T-cell (primary cell): ENCODE measurements at regions of chr3 and their contacts with region 1.

Region 1: GRCh38 chr3:69161587-69162307 is 39.4 kb upstream of the LMOD3 start:
- DNase-seq: peak in 21 of 35 experiments; percentile 1 to 72 (median 18)
- ATAC-seq: peak; percentile 54 to 66 (median 60)
- H3K4me3 ChIP-seq: no peak overlapping the region
- H3K4me3 Mint-ChIP-seq: no peak overlapping the region
- H3K27ac ChIP-seq: no peak overlapping the region
- H3K27ac Mint-ChIP-seq: no peak overlapping the region
- H3K4me1 ChIP-seq: no peaks in the 10 kb centered on the region
- H3K4me1 Mint-ChIP-seq: peaks cover 0 to 9% (median 3%) of the 10 kb centered on the region in 3 donors
- H3K27me3 ChIP-seq: peaks cover 0 to 3% of the 10 kb centered on the region in 2 experiments
- H3K27me3 Mint-ChIP-seq: no peaks in the 10 kb centered on the region

Region 2: DNA sequence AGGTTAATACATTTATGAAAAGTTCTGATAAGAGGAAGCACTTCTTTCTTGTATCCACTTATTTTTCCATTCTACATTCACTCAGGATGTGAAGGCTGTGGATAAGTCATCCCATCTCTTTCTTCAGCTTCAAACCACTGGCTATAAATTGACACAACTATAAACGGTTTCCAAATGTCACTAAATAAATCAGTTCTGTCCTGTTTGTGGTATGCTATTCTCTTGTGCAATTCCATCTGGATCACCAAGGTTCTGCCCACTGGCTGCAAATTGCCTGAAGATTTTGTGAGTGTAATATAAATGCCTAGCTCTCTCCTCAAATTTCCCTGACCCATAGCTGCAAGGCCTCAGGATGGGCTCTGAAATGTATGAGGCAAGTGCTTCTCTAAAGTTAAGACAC is 32.2 kb before region 1 on chr3:
- CTCF ChIA-PET with region 1: no interaction called
- POLR2A ChIA-PET with region 1: no interaction called
- DNase-seq: no peak
- ATAC-seq: no peak
- H3K4me3 ChIP-seq: no peak overlapping the region
- H3K4me3 Mint-ChIP-seq: no peak overlapping the region
- H3K27ac ChIP-seq: no peak overlapping the region
- H3K27ac Mint-ChIP-seq: no peak overlapping the region
- H3K4me1 ChIP-seq: no peaks in the 10 kb centered on the region
- H3K4me1 Mint-ChIP-seq: no peaks in the 10 kb centered on the region
- H3K27me3 ChIP-seq: no peaks in the 10 kb centered on the region
- H3K27me3 Mint-ChIP-seq: peaks cover 0 to 12% of the 10 kb centered on the region in 2 donors

Region 3: GRCh38 chr3:69174445-69174844 is 12.7 kb after region 1 on chr3:
- CTCF ChIA-PET with region 1: interaction called, 7 to 11 read pairs
- POLR2A ChIA-PET with region 1: interaction called in 1 of 2 experiments, 3 read pairs
- DNase-seq: no peak
- ATAC-seq: no peak
- H3K4me3 ChIP-seq: no peak overlapping the region
- H3K4me3 Mint-ChIP-seq: no peak overlapping the region
- H3K27ac ChIP-seq: no peak overlapping the region
- H3K27ac Mint-ChIP-seq: no peak overlapping the region
- H3K4me1 ChIP-seq: peaks cover 0 to 3% of the 10 kb centered on the region in 2 experiments
- H3K4me1 Mint-ChIP-seq: peaks cover 0 to 16% (median 7%) of the 10 kb centered on the region in 3 donors
- H3K27me3 ChIP-seq: no peaks in the 10 kb centered on the region
- H3K27me3 Mint-ChIP-seq: no peaks in the 10 kb centered on the region

Region 4: DNA sequence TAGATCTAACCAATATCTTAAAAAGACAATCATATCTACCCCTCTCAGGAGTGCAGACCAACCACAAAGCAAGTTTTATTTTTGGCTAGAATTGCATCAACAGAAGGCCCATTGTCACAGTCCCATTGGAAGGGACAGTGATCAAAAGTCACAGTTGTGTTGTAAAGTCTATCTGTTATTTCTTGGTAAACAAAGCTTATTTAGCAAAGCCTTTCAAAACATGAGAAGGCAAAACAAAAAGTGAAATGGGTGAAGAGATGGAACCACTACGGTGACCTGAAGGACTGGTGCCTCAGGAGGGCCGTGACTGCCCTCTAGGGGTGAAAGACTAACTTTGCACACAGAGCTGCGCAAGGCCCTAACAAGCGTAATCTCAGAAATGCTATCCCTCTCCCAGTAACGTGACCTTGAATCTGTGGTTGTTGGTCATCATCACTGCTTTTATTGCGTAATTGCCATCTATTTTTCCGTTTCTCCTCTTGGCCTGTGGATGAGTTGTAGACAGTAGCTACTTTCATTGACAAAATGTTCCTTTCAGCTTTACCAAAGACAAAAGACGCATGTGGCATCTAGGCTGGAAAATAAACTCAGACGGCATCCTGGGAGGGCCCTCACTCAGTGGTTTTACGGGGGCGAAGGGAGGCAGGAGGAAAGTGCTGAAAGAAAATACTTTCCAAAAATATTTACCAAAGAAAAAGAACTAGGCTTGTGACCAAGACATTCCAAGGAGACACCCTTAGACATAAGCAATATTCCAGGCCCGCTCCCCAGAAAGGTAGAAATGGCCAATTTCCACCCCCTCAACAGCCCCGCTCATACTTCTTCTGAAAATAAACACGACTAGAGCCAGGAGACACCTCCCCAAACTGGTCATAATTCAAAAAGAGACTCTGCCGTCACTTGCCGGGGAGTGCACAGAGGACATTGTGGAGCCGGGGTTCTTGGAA is 144.8 kb after region 1 on chr3:
- CTCF ChIA-PET with region 1: interaction called, 65 to 139 read pairs
- POLR2A ChIA-PET with region 1: interaction called in 1 of 2 experiments, 4 read pairs
- DNase-seq: peak; percentile 23 to 87 (median 54)
- ATAC-seq: peak; percentile 96 to 98 (median 98)
- H3K4me3 ChIP-seq: no peak overlapping the region
- H3K4me3 Mint-ChIP-seq: no peak overlapping the region
- H3K27ac ChIP-seq: no peak overlapping the region
- H3K27ac Mint-ChIP-seq: no peak overlapping the region
- H3K4me1 ChIP-seq: no peaks in the 10 kb centered on the region
- H3K4me1 Mint-ChIP-seq: peaks cover 6 to 8% (median 7%) of the 10 kb centered on the region in 3 donors
- H3K27me3 ChIP-seq: no peaks in the 10 kb centered on the region
- H3K27me3 Mint-ChIP-seq: no peaks in the 10 kb centered on the region

Region 5: DNA sequence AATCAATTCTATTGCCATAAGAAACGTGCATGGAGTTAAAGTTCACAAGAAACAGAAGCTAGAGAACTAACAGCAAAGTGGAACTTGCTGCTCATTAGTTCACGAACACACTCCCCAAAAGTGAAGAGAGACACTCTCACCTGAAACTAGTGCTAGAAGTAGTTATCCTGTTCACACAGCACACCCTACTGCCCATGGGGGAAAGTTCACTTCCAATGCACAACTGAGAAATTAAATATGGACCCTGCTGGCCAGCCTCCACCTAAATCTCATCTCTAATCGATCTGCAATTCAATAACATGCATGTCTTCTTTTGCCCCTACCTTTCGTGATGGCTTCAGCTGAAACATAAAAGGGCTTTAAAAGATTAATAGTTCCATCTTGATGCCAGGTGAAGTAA is 263.5 kb after region 1 on chr3:
- CTCF ChIA-PET with region 1: interaction called in 1 of 2 experiments, 10 read pairs
- POLR2A ChIA-PET with region 1: no interaction called
- DNase-seq: peak in 12 of 35 experiments; percentile 0 to 44 (median 4)
- ATAC-seq: peak in 3 of 4 experiments; percentile 30 to 50 (median 38)
- H3K4me3 ChIP-seq: no peak overlapping the region
- H3K4me3 Mint-ChIP-seq: no peak overlapping the region
- H3K27ac ChIP-seq: no peak overlapping the region
- H3K27ac Mint-ChIP-seq: no peak overlapping the region
- H3K4me1 ChIP-seq: no peaks in the 10 kb centered on the region
- H3K4me1 Mint-ChIP-seq: no peaks in the 10 kb centered on the region
- H3K27me3 ChIP-seq: peaks cover 0 to 2% of the 10 kb centered on the region in 2 experiments
- H3K27me3 Mint-ChIP-seq: peaks cover 0 to under 1% of the 10 kb centered on the region in 2 donors